Sigmoid colon (tissue), 7 donors: ENCODE measurements at regions of chr5 and their contacts with region 1.

Region 1: GRCh38 chr5:136769900-136770684 is 404.7 kb upstream of the TRPC7 start:
- DNase-seq: peak; percentile 75
- H3K4me3 ChIP-seq: no peak overlapping the region
- H3K27ac ChIP-seq: no peak overlapping the region
- H3K4me1 ChIP-seq: no peaks in the 10 kb centered on the region
- H3K27me3 ChIP-seq: no peaks in the 10 kb centered on the region
- CTCF ChIP-seq: peak; percentile 23 to 74 (median 68)
- EP300 ChIP-seq: no peak
- POLR2A ChIP-seq: no peak

Region 2: DNA sequence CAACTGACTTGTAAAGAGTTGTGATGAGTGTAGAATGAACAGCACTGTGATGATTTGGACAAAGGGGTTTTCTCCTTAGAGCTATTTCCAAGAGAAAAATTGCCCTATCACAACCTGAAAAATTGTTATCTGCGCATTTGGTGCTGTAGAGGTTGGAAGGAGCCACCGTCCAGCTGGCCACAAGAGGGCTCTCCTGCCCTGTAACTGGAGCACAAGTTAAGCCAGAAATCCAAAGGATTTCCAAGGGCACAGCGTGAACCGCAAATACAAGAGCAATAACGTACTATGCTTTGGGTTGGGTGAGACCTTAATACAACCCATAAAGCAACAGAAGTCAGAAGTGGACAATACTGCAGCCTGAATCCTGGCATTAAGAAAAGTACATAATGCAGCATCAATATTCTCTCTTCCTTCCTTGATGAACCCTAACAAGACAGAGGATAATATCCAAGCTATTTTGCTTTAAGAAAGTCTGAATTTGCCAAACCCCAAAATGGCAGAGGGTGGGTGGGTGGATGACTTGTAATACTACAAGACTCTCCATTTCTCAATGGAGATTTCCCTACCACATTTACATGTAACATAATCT is 520.3 kb before region 1 on chr5:
- intact Hi-C with region 1: loop called (anchors 5 kb)
- DNase-seq: no peak
- H3K4me3 ChIP-seq: no peak overlapping the region
- H3K27ac ChIP-seq: no peak overlapping the region
- H3K4me1 ChIP-seq: no peaks in the 10 kb centered on the region
- H3K27me3 ChIP-seq: no peaks in the 10 kb centered on the region
- CTCF ChIP-seq: peak; percentile 22 to 71 (median 55)
- EP300 ChIP-seq: no peak
- POLR2A ChIP-seq: no peak